HepG2 (cell line): ENCODE measurements at regions of chr7 and their contacts with region 1.

Region 1: GRCh38 chr7:23105644-23106056 is at the start of gene KLHL7:
- DNase-seq: peak; percentile 88
- ATAC-seq: peak; percentile 98
- H3K4me3 ChIP-seq: peak within 1 kb of the TSS; percentile 88 to 97 (median 96)
- H3K27ac ChIP-seq: peak within 1 kb of the TSS; percentile 87
- H3K4me1 ChIP-seq: peaks cover 18% of the 10 kb centered on the region
- H3K27me3 ChIP-seq: no peaks in the 10 kb centered on the region; a peak in 1 of 5 replicates
- CTCF ChIP-seq: no peak; the same call in 1 of the 2 replicates
- EP300 ChIP-seq: no peak; a peak in 1 of 4 replicates
- POLR2A ChIP-seq: peak; percentile 87 to 97
- RAD21 ChIP-seq: no peak
- total RNA-seq, gene KLHL7: 34.4 and 43.2 TPM in 2 replicates

Region 2: GRCh38 chr7:23074443-23075261 is 31.0 kb before region 1 on chr7:
- CTCF ChIA-PET with region 1: no interaction called
- POLR2A ChIA-PET with region 1: no interaction called
- in situ Hi-C with region 1: no loop called
- intact Hi-C with region 1: loop called (anchors 2 kb)
- DNase-seq: peak; percentile 79
- ATAC-seq: peak; percentile 72
- H3K4me3 ChIP-seq: no peak overlapping the region
- H3K27ac ChIP-seq: no peak overlapping the region
- H3K4me1 ChIP-seq: peaks cover 12% of the 10 kb centered on the region
- H3K27me3 ChIP-seq: peaks cover 1 to 50% of the 10 kb centered on the region in 2 experiments; a peak in 3 of 5 replicates
- CTCF ChIP-seq: no peak
- EP300 ChIP-seq: 0 out of 4 replicates have a peak, but pooled peaks of 1 of the 2 experiments have one; percentile 39
- POLR2A ChIP-seq: no peak
- RAD21 ChIP-seq: no peak

Region 3: DNA sequence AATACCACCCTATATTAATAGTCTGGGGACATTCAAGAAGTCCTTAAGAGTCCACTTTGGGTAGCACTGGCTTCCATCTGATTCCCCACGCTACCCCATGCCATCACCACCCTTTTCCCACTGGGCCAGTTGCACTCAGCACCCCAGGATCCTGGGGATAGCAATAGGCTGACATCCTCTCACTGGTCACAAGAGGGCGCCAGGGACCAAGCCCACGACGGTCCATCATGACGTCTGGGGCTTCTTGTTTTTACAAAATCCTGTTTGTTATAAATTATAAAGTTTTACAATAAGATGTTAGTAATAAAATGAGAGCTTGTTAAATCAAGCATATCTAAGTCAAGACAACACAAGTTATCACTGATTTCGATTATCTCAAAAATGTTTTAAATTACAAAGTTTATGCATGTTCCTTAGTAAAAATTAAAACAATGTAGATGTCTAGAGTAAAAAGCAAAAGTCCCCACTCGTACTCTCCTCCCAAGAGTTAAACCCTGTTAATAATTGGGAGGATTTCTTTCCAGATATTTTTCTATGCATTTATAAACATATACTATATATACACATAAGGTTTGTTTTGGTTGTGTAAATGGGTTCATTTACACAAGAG is 156.3 kb after region 1 on chr7:
- CTCF ChIA-PET with region 1: no interaction called
- POLR2A ChIA-PET with region 1: no interaction called
- in situ Hi-C with region 1: no loop called
- intact Hi-C with region 1: loop called (anchors 10 kb)
- DNase-seq: peak; percentile 58
- ATAC-seq: peak; percentile 97
- H3K4me3 ChIP-seq: no peak overlapping the region; a peak in 1 of 6 replicates
- H3K27ac ChIP-seq: no peak overlapping the region
- H3K4me1 ChIP-seq: no peaks in the 10 kb centered on the region
- H3K27me3 ChIP-seq: peaks cover 3 to 26% of the 10 kb centered on the region in 2 experiments; a peak in 3 of 5 replicates
- CTCF ChIP-seq: peak; percentile 84
- EP300 ChIP-seq: no peak
- POLR2A ChIP-seq: no peak
- RAD21 ChIP-seq: peak; percentile 75